CD8-positive, alpha-beta memory T cell (primary cell): ENCODE measurements at regions of chr6 and their contacts with region 1.

Region 1: DNA sequence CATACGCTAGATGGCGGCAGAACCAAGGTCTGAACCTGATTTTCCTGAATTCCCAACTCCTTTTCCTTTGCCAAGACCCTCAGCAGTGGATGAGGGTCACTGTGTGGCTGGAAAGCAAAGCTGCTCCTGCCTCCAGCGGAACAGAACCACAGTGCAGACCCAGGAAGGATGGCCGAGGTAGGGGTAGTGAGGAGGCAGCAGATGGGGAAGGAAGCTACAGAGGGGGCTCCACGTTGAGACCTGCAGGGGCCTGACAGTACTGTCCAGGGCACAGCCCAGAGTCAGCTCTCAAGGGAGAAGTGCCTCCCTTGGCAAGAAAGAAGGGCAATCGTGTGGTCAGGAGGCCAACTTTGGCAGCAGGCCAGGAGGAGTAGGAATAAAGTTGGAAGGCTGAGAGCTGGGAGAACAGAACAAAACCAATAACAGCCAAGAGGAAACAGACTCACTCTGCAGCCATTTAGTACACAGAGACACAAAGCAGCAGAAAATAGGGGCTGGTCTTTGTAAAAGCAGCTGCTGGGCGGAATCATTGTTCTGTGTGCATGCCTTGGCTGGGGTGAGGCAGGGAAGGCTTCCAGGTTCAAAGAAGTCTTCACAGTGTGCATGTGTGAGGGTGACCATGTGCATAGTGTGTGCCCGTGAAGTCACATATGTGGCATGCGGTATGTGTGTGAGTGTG is 3.1 kb downstream of the GABRR2 start:
- DNase-seq: no peak
- H3K4me3 ChIP-seq: no peak overlapping the region
- H3K4me3 Mint-ChIP-seq: no peak overlapping the region
- H3K27ac ChIP-seq: no peak overlapping the region
- H3K27ac Mint-ChIP-seq: peak overlapping the region in 2 of 8 donors; percentile 2 to 39
- H3K4me1 ChIP-seq: no peaks in the 10 kb centered on the region
- H3K4me1 Mint-ChIP-seq: peaks cover 0 to 3% (median 0%) of the 10 kb centered on the region in 3 donors
- H3K27me3 ChIP-seq: no peaks in the 10 kb centered on the region
- H3K27me3 Mint-ChIP-seq: peaks cover 0 to 4% of the 10 kb centered on the region in 2 donors

Region 2: GRCh38 chr6:89242574-89243330 is 69.2 kb before region 1 on chr6:
- CTCF ChIA-PET with region 1: no interaction called
- POLR2A ChIA-PET with region 1: interaction called, 12 read pairs
- DNase-seq: peak in 1 of 5 donors; percentile 10
- H3K4me3 ChIP-seq: no peak overlapping the region
- H3K4me3 Mint-ChIP-seq: no peak overlapping the region
- H3K27ac ChIP-seq: no peak overlapping the region
- H3K27ac Mint-ChIP-seq: no peak overlapping the region
- H3K4me1 ChIP-seq: peaks cover 14% of the 10 kb centered on the region
- H3K4me1 Mint-ChIP-seq: peaks cover 16 to 22% (median 20%) of the 10 kb centered on the region in 3 donors
- H3K27me3 ChIP-seq: no peaks in the 10 kb centered on the region
- H3K27me3 Mint-ChIP-seq: peaks cover 9 to 24% of the 10 kb centered on the region in 2 donors

Region 3: DNA sequence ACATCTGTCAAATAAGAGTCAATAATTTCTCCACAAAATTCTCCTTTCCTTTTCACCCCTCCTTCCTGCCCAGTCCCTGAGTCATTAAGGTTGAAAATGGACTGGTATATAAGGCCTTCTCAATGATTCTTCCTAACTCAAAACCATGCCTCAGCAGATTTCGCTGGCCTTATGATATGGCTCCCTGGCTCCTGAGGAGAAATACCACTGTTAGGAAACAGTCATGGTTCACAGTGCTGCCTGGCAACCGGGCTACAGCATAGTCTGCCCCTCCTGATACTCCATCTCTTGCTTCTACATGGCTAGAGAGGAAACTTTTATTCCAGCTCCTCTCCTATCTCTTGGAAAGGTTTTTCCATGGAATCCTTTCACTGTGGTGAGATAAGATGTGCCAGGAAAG is 35.8 kb after region 1 on chr6:
- CTCF ChIA-PET with region 1: no interaction called
- POLR2A ChIA-PET with region 1: no interaction called
- DNase-seq: no peak
- H3K4me3 ChIP-seq: no peak overlapping the region
- H3K4me3 Mint-ChIP-seq: no peak overlapping the region
- H3K27ac ChIP-seq: no peak overlapping the region
- H3K27ac Mint-ChIP-seq: peak overlapping the region; percentile 44 to 97 (median 73)
- H3K4me1 ChIP-seq: peaks cover 40% of the 10 kb centered on the region
- H3K4me1 Mint-ChIP-seq: peaks cover 60 to 76% (median 72%) of the 10 kb centered on the region in 3 donors
- H3K27me3 ChIP-seq: no peaks in the 10 kb centered on the region
- H3K27me3 Mint-ChIP-seq: no peaks in the 10 kb centered on the region